Activated CD4-positive, alpha-beta memory T cell treated with anti-CD3 and anti-CD28 coated beads, Interleukin-2, amount 10 ng/mL, durations not matched to agents 7 days and 5 days (primary cell): ENCODE measurements at regions of chr16 and their contacts with region 1.

Region 1: DNA sequence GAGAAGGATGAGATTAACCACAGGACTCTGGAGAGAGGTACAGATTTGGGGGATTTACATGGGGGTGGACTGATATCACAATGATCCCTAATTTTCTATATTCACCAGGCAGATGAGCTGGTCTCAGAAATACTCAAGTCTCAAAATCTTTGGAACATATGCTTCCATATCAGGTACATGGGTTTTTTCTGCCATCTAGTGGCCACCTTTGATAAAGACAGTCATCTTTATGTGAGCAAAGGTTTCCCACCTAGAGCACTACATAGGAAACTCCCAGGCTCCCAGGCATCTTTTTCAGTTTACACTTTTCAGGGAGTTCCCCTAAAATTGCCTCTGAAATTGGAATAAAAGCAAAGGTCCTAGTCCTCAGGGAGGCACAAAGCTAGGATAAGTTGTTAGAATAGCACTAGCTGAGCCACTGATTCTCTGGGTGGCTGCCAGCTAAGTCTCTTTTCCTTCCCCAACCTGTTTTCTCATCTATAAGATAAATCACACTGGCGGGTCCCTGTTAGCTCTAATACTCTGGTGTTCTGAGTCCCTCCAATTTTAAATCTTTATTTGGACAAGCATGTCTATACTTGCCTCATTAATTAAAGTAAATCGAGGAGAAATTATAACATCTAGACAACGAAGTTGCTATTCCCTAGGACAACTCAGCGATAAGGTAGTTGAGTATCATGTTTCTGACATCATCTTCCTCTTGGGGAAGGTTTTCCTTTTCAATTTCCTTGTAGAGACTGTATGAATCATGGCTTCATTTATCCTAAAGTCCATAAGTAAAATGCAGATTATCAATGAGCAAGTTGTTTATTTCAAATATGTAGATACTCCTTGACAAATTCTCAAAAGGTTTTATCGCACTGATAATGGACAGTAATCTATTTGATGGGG is 19.0 kb upstream of the MON1B start:
- DNase-seq: no peak
- H3K4me3 Mint-ChIP-seq: no peak overlapping the region
- H3K27ac Mint-ChIP-seq: no peak overlapping the region
- H3K4me1 Mint-ChIP-seq: no peaks in the 10 kb centered on the region
- H3K27me3 Mint-ChIP-seq: peaks cover 25% of the 10 kb centered on the region

Region 2: GRCh38 chr16:75787440-75787839 is 1384.5 kb before region 1 on chr16:
- CTCF ChIA-PET with region 1: interaction called, 10 read pairs
- POLR2A ChIA-PET with region 1: no interaction called
- DNase-seq: no peak
- H3K4me3 Mint-ChIP-seq: no peak overlapping the region
- H3K27ac Mint-ChIP-seq: no peak overlapping the region
- H3K4me1 Mint-ChIP-seq: no peaks in the 10 kb centered on the region
- H3K27me3 Mint-ChIP-seq: peaks cover 15% of the 10 kb centered on the region

Region 3: GRCh38 chr16:77137045-77137444 is 34.9 kb before region 1 on chr16:
- CTCF ChIA-PET with region 1: no interaction called
- POLR2A ChIA-PET with region 1: no interaction called
- DNase-seq: no peak
- H3K4me3 Mint-ChIP-seq: no peak overlapping the region
- H3K27ac Mint-ChIP-seq: no peak overlapping the region
- H3K4me1 Mint-ChIP-seq: no peaks in the 10 kb centered on the region
- H3K27me3 Mint-ChIP-seq: no peaks in the 10 kb centered on the region

Region 4: DNA sequence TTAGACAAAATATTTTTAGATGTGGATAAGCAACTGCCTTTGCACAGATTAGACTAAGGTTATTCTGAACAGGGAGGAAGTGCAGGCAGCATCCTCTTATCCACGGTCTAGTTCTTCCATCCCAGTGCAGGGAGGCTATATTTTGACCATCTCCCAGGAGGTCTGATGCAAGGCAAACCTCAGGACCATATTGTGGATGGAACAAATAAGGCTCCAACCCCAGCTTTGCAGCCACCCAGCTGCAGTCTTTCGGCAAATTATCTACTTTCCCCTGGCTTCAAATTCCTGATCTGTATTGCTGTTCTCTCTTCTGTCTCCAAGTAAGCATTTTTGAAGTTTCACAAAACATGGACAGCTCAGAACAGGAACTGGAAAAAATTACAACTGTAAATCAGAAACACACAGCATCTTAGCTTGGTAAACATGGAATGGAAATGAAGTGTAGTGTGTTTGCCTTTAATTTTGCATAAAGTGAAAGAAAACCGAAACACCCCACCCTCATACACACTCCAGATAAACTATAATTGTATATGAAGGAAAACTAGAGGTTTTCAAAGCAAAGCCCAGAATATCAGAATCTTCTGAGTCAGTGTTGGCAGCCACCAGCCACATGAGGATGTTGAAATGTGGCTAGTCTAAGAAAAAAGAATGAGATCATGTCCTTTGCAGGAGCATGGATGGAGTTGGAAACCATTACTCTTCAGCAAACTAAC is 14.5 kb before region 1 on chr16:
- CTCF ChIA-PET with region 1: interaction called, 19 read pairs
- POLR2A ChIA-PET with region 1: no interaction called
- DNase-seq: no peak
- H3K4me3 Mint-ChIP-seq: no peak overlapping the region
- H3K27ac Mint-ChIP-seq: no peak overlapping the region
- H3K4me1 Mint-ChIP-seq: no peaks in the 10 kb centered on the region
- H3K27me3 Mint-ChIP-seq: peaks cover 3% of the 10 kb centered on the region

Region 5: DNA sequence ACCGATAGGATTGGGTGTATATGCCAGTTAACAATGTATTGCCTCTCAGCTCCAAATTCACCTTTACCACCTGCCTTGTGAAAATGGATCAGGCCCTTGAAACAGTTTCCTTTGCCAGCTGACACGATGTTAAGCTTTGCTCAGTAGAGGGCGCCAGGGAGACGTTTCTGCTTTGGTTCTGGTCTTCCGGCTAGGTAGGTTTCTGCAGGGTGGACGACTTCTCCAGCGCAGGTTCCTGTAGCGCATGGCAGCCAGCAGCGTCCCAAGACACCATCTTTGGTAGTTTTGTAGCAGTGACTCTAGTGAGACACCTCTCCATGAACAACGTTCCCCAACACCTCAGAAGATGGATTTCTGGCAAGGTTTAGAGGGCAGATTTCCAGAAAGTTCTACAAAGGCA is 51.2 kb after region 1 on chr16:
- CTCF ChIA-PET with region 1: no interaction called
- POLR2A ChIA-PET with region 1: no interaction called
- DNase-seq: peak; percentile 32
- H3K4me3 Mint-ChIP-seq: no peak overlapping the region
- H3K27ac Mint-ChIP-seq: no peak overlapping the region
- H3K4me1 Mint-ChIP-seq: no peaks in the 10 kb centered on the region
- H3K27me3 Mint-ChIP-seq: peaks cover 3% of the 10 kb centered on the region